ENCODE measurements at regions of chr7 and their contacts with region 1.

Region 1: GRCh38 chr7:47266131-47266706 is 315.7 kb downstream of the TNS3 start:
- DNase-seq: peak; percentile 69
- H3K4me3 ChIP-seq: no peak overlapping the region
- H3K27ac ChIP-seq: no peak overlapping the region
- H3K4me1 ChIP-seq: no peaks in the 10 kb centered on the region
- H3K27me3 ChIP-seq: no peaks in the 10 kb centered on the region
- CTCF ChIP-seq: peak; percentile 87 to 88
- POLR2A ChIP-seq: no peak

Region 2: GRCh38 chr7:45923290-45923689 is 1342.9 kb before region 1 on chr7:
- CTCF ChIA-PET with region 1: interaction called, 22 read pairs
- POLR2A ChIA-PET with region 1: no interaction called
- dilution Hi-C with region 1: no loop called
- intact Hi-C with region 1: no loop called
- DNase-seq: peak; percentile 73
- H3K4me3 ChIP-seq: peak overlapping the region in 1 of 3 experiments; percentile 52
- H3K27ac ChIP-seq: no peak overlapping the region
- H3K4me1 ChIP-seq: peaks cover 28% of the 10 kb centered on the region
- H3K27me3 ChIP-seq: peaks cover 31 to 51% of the 10 kb centered on the region in 2 experiments
- CTCF ChIP-seq: peak; percentile 88 to 89
- POLR2A ChIP-seq: no peak

Region 3: GRCh38 chr7:47337531-47337930 is 71.3 kb after region 1 on chr7:
- CTCF ChIA-PET with region 1: interaction called, 18 read pairs
- POLR2A ChIA-PET with region 1: no interaction called
- dilution Hi-C with region 1: no loop called
- intact Hi-C with region 1: no loop called
- DNase-seq: no peak
- H3K4me3 ChIP-seq: no peak overlapping the region
- H3K27ac ChIP-seq: no peak overlapping the region
- H3K4me1 ChIP-seq: no peaks in the 10 kb centered on the region
- H3K27me3 ChIP-seq: no peaks in the 10 kb centered on the region
- CTCF ChIP-seq: no peak
- POLR2A ChIP-seq: no peak

Region 4: DNA sequence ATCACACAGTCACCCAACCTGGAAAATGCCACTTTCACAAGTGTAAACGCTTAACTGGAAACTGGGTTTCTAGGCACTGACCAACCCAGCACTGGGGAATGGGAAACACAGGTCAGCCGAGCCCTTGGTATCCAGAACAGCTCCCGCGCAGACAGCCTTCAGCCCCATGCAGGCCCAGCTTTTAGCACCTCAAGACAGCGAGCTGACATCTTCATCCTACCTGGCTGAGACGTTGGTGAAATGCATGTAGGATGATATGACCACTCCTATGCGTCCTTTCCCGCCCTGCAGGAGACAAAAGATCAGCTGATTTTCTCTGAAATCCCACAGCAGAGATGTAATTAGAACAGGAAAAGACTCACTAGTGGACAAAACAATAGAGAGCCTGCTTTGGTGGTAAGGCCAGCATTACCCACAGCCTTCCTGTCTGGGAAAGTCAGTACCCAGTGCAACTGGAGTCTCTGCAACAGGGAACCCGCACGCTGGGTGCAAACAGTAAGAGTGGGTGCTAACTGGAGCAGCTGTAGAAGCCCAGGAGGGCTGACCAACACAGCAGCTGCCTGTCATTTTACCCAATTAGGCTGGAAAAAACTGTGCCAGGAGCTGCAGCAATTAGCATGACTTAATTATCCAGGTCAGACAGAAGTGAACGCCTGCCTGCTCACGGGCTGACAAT is 162.0 kb after region 1 on chr7:
- CTCF ChIA-PET with region 1: interaction called, 87 read pairs
- POLR2A ChIA-PET with region 1: no interaction called
- dilution Hi-C with region 1: no loop called
- intact Hi-C with region 1: no loop called
- DNase-seq: peak; percentile 74
- H3K4me3 ChIP-seq: no peak overlapping the region
- H3K27ac ChIP-seq: peak overlapping the region; percentile 67
- H3K4me1 ChIP-seq: peaks cover 21% of the 10 kb centered on the region
- H3K27me3 ChIP-seq: no peaks in the 10 kb centered on the region
- CTCF ChIP-seq: no peak
- POLR2A ChIP-seq: no peak

Region 5: GRCh38 chr7:47482013-47482875 is 216.0 kb after region 1 on chr7:
- CTCF ChIA-PET with region 1: interaction called, 13 read pairs
- POLR2A ChIA-PET with region 1: no interaction called
- dilution Hi-C with region 1: no loop called
- intact Hi-C with region 1: no loop called
- DNase-seq: peak; percentile 83
- H3K4me3 ChIP-seq: no peak overlapping the region
- H3K27ac ChIP-seq: peak overlapping the region; percentile 89
- H3K4me1 ChIP-seq: peaks cover 16% of the 10 kb centered on the region
- H3K27me3 ChIP-seq: no peaks in the 10 kb centered on the region
- CTCF ChIP-seq: no peak
- POLR2A ChIP-seq: peak; percentile 49

Region 6: DNA sequence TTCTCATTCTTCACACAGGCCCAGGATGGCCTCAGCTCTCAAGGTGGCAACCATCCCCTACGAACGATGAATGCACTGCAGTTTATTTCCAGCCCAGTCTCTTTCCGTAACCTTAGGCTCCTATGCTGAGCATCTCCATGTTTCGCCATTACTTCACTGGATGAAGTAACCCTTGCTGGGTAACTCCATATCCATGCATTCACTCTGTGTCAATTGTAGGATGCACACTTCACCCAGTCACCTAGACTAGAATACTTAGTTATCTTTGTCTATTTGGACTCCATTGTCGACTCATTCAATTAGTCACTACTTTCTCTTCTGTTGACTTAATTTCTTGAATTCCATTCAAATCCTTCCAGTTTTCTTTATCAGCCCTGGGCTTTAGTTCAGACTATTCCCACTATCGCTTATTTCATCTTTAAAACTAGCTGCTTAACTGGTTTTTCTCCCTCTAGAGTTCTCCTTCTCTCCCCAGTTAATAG is 426.9 kb after region 1 on chr7:
- CTCF ChIA-PET with region 1: no interaction called
- POLR2A ChIA-PET with region 1: no interaction called
- dilution Hi-C with region 1: no loop called
- intact Hi-C with region 1: no loop called
- DNase-seq: no peak
- H3K4me3 ChIP-seq: no peak overlapping the region
- H3K27ac ChIP-seq: no peak overlapping the region
- H3K4me1 ChIP-seq: no peaks in the 10 kb centered on the region
- H3K27me3 ChIP-seq: no peaks in the 10 kb centered on the region
- CTCF ChIP-seq: no peak
- POLR2A ChIP-seq: no peak

Region 7: GRCh38 chr7:47806701-47807103 is 540.5 kb after region 1 on chr7:
- CTCF ChIA-PET with region 1: interaction called, 14 read pairs
- POLR2A ChIA-PET with region 1: no interaction called
- dilution Hi-C with region 1: no loop called
- intact Hi-C with region 1: no loop called
- DNase-seq: peak; percentile 59
- H3K4me3 ChIP-seq: no peak overlapping the region
- H3K27ac ChIP-seq: peak overlapping the region; percentile 36
- H3K4me1 ChIP-seq: peaks cover 31% of the 10 kb centered on the region
- H3K27me3 ChIP-seq: no peaks in the 10 kb centered on the region
- CTCF ChIP-seq: no peak
- POLR2A ChIP-seq: no peak

Region 8: GRCh38 chr7:47968847-47969774 is 702.9 kb after region 1 on chr7:
- CTCF ChIA-PET with region 1: interaction called, 22 read pairs
- POLR2A ChIA-PET with region 1: no interaction called
- dilution Hi-C with region 1: no loop called
- intact Hi-C with region 1: no loop called
- DNase-seq: peak; percentile 90
- H3K4me3 ChIP-seq: no peak overlapping the region
- H3K27ac ChIP-seq: peak overlapping the region; percentile 73
- H3K4me1 ChIP-seq: peaks cover 32% of the 10 kb centered on the region
- H3K27me3 ChIP-seq: no peaks in the 10 kb centered on the region
- CTCF ChIP-seq: peak; percentile 91 to 95
- POLR2A ChIP-seq: no peak